ENCODE measurements at regions of chr17 and their contacts with region 1.

Region 1: DNA sequence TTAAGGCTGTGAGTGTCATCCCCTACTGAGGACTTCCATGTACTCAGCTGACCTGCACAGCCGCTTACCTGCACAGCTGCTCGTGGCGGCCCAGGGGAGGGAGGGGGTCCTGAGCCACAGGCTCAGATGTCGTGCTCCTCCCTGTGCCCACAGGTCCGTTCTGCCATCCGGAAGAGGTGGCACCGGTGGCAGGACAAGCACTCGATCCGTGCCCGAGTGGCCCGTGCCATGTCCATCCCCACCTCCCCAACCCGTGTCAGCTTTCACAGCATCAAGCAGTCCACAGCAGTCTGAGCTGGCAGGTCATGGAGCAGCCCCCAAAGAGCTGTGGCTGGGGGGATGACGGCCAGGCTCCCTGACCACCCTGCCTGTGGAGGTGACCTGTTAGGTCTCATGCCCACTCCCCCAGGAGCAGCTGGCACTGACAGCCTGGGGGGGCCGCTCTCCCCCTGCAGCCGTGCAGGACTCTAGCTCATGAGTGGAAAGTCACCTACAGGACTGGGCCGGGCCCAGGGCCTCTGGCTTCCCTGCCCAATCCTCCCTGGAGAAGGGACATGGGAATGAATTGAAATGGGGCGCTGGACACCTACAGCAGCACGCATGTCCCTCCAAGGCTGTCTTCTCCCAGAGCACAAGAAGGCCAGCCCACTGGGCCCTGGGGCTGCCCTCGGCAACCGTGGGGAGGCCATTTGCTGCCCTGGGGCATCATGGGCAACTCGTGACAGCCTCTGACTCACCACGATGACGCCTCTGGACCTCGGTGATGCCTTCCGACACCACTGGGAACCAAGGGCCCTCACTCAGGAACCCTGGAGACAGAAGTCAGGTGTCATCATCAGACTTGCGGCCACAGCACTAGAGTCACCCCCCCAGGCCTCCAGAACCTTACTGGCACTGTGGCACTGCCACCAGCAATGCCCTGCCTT is 9.9 kb upstream of the SPPL2C start:
- DNase-seq: no peak
- ATAC-seq: no peak

Region 2: GRCh38 chr17:45640141-45640850 is 194.4 kb before region 1 on chr17:
- intact Hi-C with region 1: loop called (anchors 5 kb)
- DNase-seq: peak; percentile 68
- ATAC-seq: peak; percentile 83

Region 3: GRCh38 chr17:45914047-45914717 is 79.4 kb after region 1 on chr17:
- intact Hi-C with region 1: no loop called
- DNase-seq: no peak
- ATAC-seq: no peak

Measured in left ventricle myocardium superior (tissue), 1 donor.